ENCODE measurements at regions of chr19 and their contacts with region 1.

Region 1: GRCh38 chr19:45643024-45643926 is 4.1 kb upstream of the EML2 start:
- DNase-seq: peak; percentile 82 to 96 (median 86)
- ATAC-seq: peak; percentile 46
- H3K4me3 ChIP-seq: peak overlapping the region in 1 of 2 donors; percentile 42
- H3K27ac ChIP-seq: peak overlapping the region in 1 of 2 donors; percentile 92
- H3K4me1 ChIP-seq: peaks cover 17 to 61% of the 10 kb centered on the region in 2 donors
- H3K27me3 ChIP-seq: peaks cover 4 to 39% of the 10 kb centered on the region in 2 donors
- CTCF ChIP-seq: peak; percentile 97 to 98

Region 2: DNA sequence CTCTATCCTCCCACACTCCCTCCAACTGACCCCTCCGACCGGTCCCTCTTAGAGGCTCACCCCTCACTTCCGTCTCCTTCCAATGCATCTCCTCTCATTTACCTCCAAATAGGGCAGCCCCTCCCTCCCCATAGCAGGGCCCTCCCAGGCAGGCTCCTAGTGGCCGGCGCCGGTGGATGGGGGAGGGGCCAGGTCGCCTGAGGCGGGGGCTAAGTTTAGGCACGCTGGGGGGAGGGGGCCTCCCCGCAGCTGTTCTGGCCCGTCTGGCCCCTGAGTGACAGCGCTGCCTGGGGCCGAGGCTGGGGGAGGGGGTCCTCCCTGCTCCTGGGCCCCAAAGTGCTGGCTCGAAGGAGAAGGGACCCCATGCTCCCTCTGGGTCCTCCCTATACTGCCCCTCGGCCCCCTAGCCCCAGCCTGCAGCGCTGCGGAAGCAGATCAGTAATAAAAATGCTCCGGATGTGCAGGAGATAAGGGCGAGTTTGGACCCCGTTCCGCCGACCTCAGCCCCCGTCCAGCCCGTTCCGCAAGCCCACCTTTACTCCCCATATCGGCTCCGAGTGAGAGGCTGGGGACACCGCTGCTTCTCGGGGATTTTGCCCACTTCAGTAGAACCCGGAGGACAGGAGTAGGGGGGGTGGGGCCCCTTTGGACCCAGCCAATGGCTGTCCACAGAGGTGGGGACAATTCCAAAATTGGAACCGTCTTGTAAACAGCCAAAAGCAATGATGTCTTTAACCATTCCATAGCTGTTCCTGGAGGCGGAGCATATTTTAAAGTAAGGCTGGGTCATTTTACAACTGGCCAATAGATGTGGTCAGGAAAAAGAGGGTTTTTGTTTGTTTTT is 150.4 kb before region 1 on chr19:
- intact Hi-C with region 1: no loop called
- DNase-seq: peak; percentile 58 to 89 (median 76)
- ATAC-seq: peak; percentile 47
- H3K4me3 ChIP-seq: peak overlapping the region; percentile 34 to 52
- H3K27ac ChIP-seq: peak overlapping the region in 1 of 2 donors; percentile 48
- H3K4me1 ChIP-seq: peaks cover 11 to 40% of the 10 kb centered on the region in 2 donors
- H3K27me3 ChIP-seq: peaks cover 3 to 33% of the 10 kb centered on the region in 2 donors
- CTCF ChIP-seq: no peak

Region 3: DNA sequence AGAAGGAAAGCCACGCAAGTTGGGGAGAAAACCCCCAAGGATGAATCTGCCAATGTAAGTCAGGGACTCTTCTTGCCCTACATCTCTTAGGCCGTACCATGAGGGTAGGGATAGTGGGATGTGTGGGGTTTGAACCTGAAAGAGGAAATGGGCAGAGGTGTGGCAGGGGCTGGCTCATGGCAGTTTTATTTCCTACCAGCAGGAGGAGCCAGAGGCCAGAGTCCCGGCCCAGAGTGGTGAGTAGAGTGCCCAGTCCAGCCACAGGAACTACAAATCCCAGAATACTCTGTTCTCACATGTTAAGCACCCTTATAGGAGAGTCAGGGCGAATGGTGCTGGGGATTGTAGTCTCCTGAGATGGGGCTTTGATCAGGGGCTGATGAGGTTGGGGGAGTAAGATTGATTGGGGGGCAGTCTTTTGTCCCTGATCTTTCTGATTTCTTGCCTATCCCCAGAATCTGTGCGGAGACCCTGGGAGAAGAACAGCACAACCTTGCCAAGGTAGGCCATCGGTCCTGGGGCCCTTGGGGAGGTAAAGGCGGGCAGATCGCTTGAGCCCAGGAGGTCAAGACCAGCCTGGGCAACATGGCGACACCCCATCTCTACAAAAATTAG is 119.5 kb before region 1 on chr19:
- intact Hi-C with region 1: loop called in 1 of 2 experiments (anchors 5 kb)
- DNase-seq: peak; percentile 74 to 89 (median 80)
- ATAC-seq: peak; percentile 95
- H3K4me3 ChIP-seq: no peak overlapping the region
- H3K27ac ChIP-seq: peak overlapping the region in 1 of 2 donors; percentile 53
- H3K4me1 ChIP-seq: peaks cover 2 to 77% of the 10 kb centered on the region in 2 donors
- H3K27me3 ChIP-seq: no peaks in the 10 kb centered on the region
- CTCF ChIP-seq: peak; percentile 81 to 87